OCI-LY7 (cell line): ENCODE measurements at regions of chr1 and their contacts with region 1.

Region 1: GRCh38 chr1:225977937-225978748 is 21.0 kb downstream of the SDE2 start:
- DNase-seq: peak; percentile 63
- H3K4me3 ChIP-seq: no peak overlapping the region
- H3K27ac ChIP-seq: peak overlapping the region; percentile 24
- H3K4me1 ChIP-seq: peaks cover 19% of the 10 kb centered on the region
- CTCF ChIP-seq: peak; percentile 52; the same call in 1 of the 2 replicates

Region 2: GRCh38 chr1:225474986-225475820 is 502.9 kb before region 1 on chr1:
- CTCF ChIA-PET with region 1: no interaction called
- POLR2A ChIA-PET with region 1: no interaction called
- intact Hi-C with region 1: loop called (anchors 1 kb)
- DNase-seq: peak; percentile 70
- H3K4me3 ChIP-seq: no peak overlapping the region
- H3K27ac ChIP-seq: no peak overlapping the region
- H3K4me1 ChIP-seq: peaks cover 56% of the 10 kb centered on the region
- CTCF ChIP-seq: peak; percentile 100

Region 3: DNA sequence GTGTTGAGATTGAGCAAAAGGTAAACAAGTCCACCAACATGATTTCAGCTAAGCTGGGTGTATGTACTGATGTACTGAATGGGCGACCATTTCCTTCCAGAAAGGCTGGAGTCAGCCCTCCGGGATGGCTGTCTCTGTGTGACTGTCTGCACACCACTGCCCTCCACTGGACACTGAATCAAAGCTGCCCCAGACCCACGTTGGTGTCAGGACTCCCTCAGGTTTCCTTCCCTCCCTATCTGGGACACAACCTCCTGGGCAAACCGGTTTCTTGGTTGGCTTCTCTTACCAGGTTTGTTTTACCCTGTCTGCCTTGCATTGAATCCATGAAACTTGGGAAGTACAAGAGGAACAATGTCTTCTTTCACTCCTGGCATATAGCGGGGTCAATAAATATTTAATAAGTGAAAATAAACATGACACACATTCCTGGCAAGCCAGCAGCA is 205.8 kb before region 1 on chr1:
- CTCF ChIA-PET with region 1: interaction called, 6 read pairs
- POLR2A ChIA-PET with region 1: interaction called, 4 read pairs
- intact Hi-C with region 1: loop called (anchors 1 kb)
- DNase-seq: peak; percentile 75
- H3K4me3 ChIP-seq: no peak overlapping the region
- H3K27ac ChIP-seq: no peak overlapping the region
- H3K4me1 ChIP-seq: peaks cover 52% of the 10 kb centered on the region
- CTCF ChIP-seq: peak; percentile 88

Region 4: GRCh38 chr1:225845571-225846259 is 132.4 kb before region 1 on chr1:
- CTCF ChIA-PET with region 1: no interaction called
- POLR2A ChIA-PET with region 1: no interaction called
- intact Hi-C with region 1: loop called (anchors 2 kb)
- DNase-seq: peak; percentile 74
- H3K4me3 ChIP-seq: no peak overlapping the region
- H3K27ac ChIP-seq: no peak overlapping the region
- H3K4me1 ChIP-seq: peaks cover 49% of the 10 kb centered on the region
- CTCF ChIP-seq: peak; percentile 83

Region 5: DNA sequence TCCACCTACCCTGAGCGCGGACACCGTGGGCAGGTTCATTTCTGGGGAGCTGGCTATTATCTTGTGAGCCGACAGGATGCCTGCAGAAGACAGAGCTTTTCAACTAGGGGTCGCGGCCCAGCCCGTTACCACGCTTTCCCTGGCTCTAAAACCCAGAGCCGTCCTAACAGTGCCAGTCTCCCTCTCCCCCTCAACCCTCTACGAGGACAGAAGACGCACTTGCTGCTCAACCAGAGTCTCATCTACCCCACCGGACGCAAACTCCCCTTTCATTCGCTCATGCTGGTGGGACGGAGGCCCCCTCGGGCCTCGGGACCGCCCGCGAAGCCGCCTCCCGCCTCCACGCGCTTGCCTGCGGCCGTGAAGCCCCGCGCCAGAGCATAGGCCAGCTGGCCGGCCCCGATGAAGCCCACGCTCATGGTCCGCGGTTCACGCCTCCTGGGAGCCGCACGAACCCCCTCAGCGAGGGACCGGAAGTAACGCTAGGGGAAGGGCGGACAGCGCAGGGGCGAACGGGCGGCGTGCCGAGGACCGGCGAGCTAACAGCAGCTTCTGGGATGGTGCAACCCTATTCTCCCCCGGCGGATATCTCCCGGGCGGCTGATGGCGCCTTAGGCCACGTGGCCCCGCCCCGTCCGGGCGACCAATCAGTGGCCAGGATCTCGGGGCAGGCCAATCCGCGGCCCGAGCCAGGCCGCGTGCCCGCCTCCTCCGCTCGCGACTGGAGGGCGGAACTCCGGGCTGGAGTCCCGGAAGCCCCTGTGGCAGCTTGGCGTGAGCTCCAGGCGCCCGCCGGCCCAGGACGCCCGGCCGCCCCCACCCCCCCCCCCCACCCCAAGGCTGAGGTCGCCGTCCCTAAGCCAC is 54.2 kb before region 1 on chr1 and contains the start of gene PYCR2:
- CTCF ChIA-PET with region 1: interaction called, 3 read pairs
- POLR2A ChIA-PET with region 1: interaction called, 4 read pairs
- intact Hi-C with region 1: loop called (anchors 5 kb)
- DNase-seq: peak; percentile 98
- H3K4me3 ChIP-seq: peak within 1 kb of the TSS; percentile 91
- H3K27ac ChIP-seq: peak within 1 kb of the TSS; percentile 81
- H3K4me1 ChIP-seq: peaks cover 65% of the 10 kb centered on the region
- CTCF ChIP-seq: no peak
- total RNA-seq, gene PYCR2: 120 and 136 TPM in 2 replicates

Region 6: DNA sequence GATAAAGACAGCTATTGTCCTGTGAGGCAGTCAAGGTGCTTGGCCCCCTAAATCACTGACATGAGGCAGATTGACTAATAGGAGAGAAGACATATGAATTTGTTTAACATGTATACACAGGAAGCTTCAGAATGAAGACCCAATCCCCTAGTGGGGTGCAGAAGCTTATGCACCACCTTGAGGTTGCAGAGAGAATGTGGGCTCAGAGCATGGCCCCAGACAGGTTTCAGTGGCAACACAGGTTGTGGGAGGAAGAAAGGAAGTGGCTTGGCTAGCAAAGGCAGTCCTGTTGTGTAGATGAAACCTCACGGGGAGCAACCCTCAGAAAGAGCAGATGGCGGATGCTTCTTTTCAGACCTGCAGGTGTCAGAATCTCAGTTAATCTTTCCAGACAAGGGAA is 466.8 kb after region 1 on chr1:
- CTCF ChIA-PET with region 1: no interaction called
- POLR2A ChIA-PET with region 1: no interaction called
- intact Hi-C with region 1: no loop called
- DNase-seq: peak; percentile 97
- H3K4me3 ChIP-seq: peak overlapping the region; percentile 42
- H3K27ac ChIP-seq: peak overlapping the region; percentile 93
- H3K4me1 ChIP-seq: peaks cover 58% of the 10 kb centered on the region
- CTCF ChIP-seq: peak; percentile 81

Region 7: DNA sequence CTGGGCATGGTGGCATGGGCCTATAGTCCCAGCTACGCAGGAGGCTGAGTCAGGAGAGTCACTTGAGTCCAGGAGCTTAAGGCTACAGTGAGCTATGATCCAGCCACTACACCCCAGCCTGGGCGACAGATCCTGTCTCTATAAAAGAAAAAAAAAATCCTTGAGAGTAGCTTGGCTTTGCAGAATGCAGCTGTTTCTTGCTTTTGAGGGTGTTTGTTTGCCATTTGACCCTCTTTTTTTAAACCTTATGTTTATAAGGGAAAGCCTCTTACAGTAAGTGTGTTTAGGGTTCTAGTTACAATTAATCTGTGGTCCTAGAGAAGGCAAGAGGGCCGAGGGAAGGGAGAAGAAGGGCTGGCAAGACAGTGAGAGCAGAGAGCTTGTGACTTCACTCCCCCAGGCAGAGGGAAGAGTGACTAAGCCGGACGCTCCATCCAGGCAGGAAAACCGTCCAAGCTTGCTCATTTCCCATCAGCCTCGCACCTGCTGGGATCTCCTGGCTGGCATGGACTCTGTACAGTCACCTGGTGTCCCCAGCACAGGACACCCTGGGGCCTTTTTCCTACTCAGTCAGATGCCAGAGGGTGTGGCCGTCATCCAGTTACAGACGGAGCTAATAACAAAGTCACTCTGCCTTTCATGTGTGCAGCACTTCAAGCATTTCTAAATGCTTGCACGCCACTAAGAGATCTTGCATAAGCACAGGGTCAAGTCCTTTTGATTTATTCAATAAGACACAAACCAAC is 836.8 kb after region 1 on chr1:
- CTCF ChIA-PET with region 1: no interaction called
- POLR2A ChIA-PET with region 1: no interaction called
- intact Hi-C with region 1: no loop called
- DNase-seq: no peak
- H3K4me3 ChIP-seq: no peak overlapping the region
- H3K27ac ChIP-seq: no peak overlapping the region
- H3K4me1 ChIP-seq: no peaks in the 10 kb centered on the region
- CTCF ChIP-seq: no peak